Tibial artery (tissue), 4 donors: ENCODE measurements at regions of chr3 and their contacts with region 1.

Region 1: DNA sequence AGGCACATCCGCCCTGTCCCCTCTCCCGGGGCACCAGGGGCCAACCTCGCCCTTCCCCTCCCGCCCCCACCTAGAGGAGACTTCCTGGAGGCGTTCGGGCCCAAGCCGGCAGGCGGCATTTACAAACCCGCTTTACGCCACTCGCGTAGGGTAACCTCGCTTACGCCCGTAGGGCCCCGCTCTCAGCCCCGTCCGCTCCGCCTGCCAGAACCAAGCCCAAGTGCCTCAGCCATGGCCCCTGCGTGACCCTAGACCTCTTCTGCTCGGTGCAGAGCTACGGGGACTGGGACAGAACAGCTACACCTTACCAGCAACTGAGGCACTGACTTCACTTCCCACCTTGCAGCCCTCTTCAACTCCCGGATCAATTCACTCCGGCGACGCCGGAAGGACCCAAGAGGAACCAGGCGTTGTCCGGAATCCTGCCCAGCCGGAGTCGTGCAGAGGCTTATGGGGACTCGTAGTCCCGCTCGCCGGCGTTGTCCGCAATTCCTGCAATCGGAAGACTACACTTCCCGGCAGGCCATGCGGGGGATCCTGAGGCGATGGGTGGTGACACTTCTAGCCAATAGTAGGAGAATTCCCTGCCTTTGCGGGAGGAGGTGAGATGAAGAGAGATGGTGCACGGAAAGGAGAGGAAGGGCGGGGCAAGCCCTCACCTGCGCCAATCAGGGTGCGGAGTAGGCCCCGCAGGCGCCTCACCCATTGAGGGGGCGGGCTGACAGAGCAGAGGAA is at the start of gene PDCD10:
- DNase-seq: peak; percentile 99
- H3K4me3 ChIP-seq: peak within 1 kb of the TSS; percentile 70 to 78
- H3K27ac ChIP-seq: peak within 1 kb of the TSS; percentile 90 to 95
- H3K4me1 ChIP-seq: peaks cover 0 to 40% (median 10%) of the 10 kb centered on the region in 4 donors
- H3K27me3 ChIP-seq: no peaks in the 10 kb centered on the region
- CTCF ChIP-seq: no peak

Region 2: DNA sequence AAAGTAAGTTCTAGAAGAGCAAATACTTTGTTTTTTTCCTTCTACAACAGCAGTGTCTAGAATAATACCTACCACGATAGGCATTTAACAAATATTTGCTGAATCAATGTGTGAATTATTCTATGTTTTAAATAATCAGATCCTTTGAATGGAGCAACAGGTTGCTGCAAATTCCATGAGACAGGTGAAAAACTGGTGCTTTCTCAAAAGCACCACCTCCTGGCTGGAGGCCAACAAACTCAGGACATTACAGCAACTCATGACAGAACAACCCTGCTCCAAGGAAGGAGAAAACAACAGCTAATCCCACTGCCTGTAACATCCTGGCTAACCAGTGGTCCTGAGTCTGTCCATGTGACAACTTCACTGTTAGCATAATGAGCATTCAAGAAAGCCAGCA is 194.8 kb before region 1 on chr3:
- intact Hi-C with region 1: no loop called
- DNase-seq: no peak
- H3K4me3 ChIP-seq: no peak overlapping the region
- H3K27ac ChIP-seq: no peak overlapping the region
- H3K4me1 ChIP-seq: no peaks in the 10 kb centered on the region
- H3K27me3 ChIP-seq: no peaks in the 10 kb centered on the region
- CTCF ChIP-seq: no peak

Region 3: GRCh38 chr3:167876620-167877281 is 142.1 kb after region 1 on chr3:
- intact Hi-C with region 1: loop called (anchors 10 kb)
- DNase-seq: peak in 1 of 2 donors; percentile 20
- H3K4me3 ChIP-seq: no peak overlapping the region
- H3K27ac ChIP-seq: peak overlapping the region; percentile 56 to 68
- H3K4me1 ChIP-seq: peaks cover 0 to 40% (median 24%) of the 10 kb centered on the region in 4 donors
- H3K27me3 ChIP-seq: no peaks in the 10 kb centered on the region
- CTCF ChIP-seq: no peak